Activated CD4-positive, alpha-beta T cell treated with anti-CD3 and anti-CD28 coated beads, Interleukin-2, amount 10 ng/mL, durations not matched to agents 7 days and 5 days (primary cell): ENCODE measurements at regions of chr14 and their contacts with region 1.

Region 1: DNA sequence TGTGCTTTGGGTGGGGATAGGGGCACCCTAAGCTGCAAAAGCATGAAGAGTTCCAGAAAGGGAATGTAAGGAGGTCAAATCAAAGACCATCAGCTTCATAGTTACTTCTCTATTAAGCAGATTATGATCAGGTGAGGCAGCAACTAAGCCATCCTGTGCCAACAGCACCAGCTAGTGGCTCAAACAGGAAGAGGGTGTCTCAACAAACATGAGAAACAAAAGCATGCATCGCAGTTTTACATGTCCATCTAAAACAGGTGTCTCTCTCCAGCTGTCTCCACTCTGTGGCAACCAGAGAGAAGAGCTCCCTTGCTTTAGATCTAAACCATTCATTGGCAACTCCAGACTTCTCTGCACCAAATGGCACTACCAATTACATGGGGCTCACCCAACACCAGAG is 52.9 kb downstream of the ACTN1 start:
- DNase-seq: peak; percentile 18
- H3K4me3 Mint-ChIP-seq: no peak overlapping the region
- H3K27ac Mint-ChIP-seq: no peak overlapping the region
- H3K4me1 Mint-ChIP-seq: peaks cover 46% of the 10 kb centered on the region
- H3K27me3 Mint-ChIP-seq: no peaks in the 10 kb centered on the region

Region 2: DNA sequence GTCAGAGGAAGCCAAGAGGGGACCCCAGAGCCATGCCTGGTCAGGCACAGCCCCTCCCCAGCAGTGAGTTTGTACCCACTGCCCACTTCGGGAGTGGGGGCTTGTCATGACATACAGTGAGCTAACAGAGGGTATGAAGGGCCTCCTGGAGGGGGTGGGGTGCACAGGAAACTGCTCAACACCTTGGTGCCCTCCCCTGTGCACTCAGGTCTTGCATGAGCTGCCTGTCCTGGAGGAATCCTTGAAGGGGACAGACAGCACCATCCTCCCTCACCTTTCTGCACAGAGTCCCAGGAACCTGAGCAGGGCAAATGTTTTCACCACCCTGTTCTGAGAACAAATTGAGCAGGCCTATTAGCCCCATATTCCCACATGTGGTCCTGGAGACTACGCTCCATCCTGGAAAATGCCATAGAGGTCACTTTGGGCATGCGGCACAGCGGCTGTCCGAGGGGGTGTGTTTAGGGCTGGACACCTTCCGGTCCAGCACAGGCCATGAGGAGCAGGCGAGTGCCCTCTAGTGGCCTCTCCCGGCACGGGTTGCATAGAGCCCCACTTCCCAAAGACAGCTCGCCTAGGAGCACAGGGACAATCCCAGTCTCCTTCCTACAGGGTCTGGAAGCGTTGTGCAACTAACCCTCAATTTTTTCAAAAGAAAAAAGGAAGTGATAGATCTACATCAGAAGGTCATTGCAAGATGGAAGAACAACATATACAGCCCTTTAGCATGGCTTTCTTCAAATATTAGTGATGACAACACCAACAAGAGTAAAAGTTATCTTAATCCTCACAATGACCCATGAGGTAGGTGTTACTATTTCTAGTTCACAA is 101.5 kb before region 1 on chr14:
- CTCF ChIA-PET with region 1: no interaction called
- POLR2A ChIA-PET with region 1: no interaction called
- DNase-seq: no peak
- H3K4me3 Mint-ChIP-seq: no peak overlapping the region
- H3K27ac Mint-ChIP-seq: no peak overlapping the region
- H3K4me1 Mint-ChIP-seq: peaks cover 25% of the 10 kb centered on the region
- H3K27me3 Mint-ChIP-seq: peaks cover 2% of the 10 kb centered on the region

Region 3: GRCh38 chr14:68843471-68844209 is 82.6 kb before region 1 on chr14:
- CTCF ChIA-PET with region 1: no interaction called
- POLR2A ChIA-PET with region 1: no interaction called
- DNase-seq: peak; percentile 77
- H3K4me3 Mint-ChIP-seq: no peak overlapping the region
- H3K27ac Mint-ChIP-seq: no peak overlapping the region
- H3K4me1 Mint-ChIP-seq: peaks cover 20% of the 10 kb centered on the region
- H3K27me3 Mint-ChIP-seq: no peaks in the 10 kb centered on the region

Region 4: DNA sequence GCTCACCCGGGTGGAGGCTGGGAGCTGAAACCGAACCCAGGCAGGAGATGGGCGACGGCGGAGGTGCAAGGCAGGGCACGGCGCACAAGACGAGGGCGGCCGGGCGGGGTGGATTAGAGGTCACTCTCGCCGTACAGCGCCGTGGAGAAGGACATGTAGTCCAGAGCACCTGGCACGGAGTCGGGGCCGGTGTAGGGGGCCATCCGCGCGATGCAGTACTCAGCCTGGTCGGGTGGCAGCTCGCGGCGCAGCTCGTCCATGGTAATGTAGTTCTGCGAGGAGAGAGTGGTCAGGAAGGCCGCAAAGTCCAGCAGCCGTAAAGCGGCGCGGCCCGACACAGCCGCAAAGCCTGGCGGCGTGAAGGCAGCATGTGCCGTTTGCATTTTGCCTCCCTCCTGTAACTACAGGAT is 51.5 kb before region 1 on chr14:
- CTCF ChIA-PET with region 1: no interaction called
- POLR2A ChIA-PET with region 1: no interaction called
- DNase-seq: no peak
- H3K4me3 Mint-ChIP-seq: peak overlapping the region; percentile 49
- H3K27ac Mint-ChIP-seq: no peak overlapping the region
- H3K4me1 Mint-ChIP-seq: no peaks in the 10 kb centered on the region
- H3K27me3 Mint-ChIP-seq: no peaks in the 10 kb centered on the region

Region 5: DNA sequence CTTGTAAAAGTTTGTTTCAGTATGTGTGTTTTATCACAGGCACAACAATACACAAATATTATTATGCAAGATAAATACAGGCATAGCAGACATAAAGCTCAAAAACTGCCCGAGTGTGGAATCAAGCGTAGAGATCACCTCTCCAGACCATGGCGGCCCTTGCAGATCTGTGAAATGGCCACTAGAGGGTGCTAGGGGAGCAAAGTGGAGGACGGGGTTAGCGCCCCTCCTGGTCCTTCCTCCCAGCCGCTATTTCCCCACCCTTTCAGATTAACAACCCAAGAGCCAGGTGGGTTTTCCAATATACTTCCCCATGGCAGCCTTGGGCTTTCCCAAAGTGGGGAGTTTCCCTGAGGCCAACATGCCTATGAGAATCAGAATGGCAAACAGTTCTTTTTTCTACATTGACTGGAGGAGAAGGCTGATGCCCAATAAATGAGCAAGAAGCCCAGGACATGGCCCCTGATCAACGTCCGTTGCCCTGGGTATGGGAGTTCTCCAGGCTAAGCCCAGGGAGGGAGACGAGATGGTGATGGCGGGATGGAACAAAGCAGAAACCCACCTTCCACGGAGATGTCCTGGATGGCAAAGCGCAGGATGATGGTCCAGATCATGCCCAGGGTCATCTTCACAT is 14.5 kb before region 1 on chr14:
- CTCF ChIA-PET with region 1: interaction called, 13 read pairs
- POLR2A ChIA-PET with region 1: no interaction called
- DNase-seq: peak; percentile 86
- H3K4me3 Mint-ChIP-seq: no peak overlapping the region
- H3K27ac Mint-ChIP-seq: no peak overlapping the region
- H3K4me1 Mint-ChIP-seq: peaks cover 19% of the 10 kb centered on the region
- H3K27me3 Mint-ChIP-seq: no peaks in the 10 kb centered on the region